OCI-LY7 (cell line): ENCODE measurements at regions of chr17 and their contacts with region 1.

Region 1: GRCh38 chr17:63946440-63947367 is 14.6 kb upstream of the CD79B start:
- DNase-seq: peak; percentile 85
- H3K4me3 ChIP-seq: peak overlapping the region; percentile 49
- H3K27ac ChIP-seq: peak overlapping the region; percentile 85
- H3K4me1 ChIP-seq: peaks cover 56% of the 10 kb centered on the region
- CTCF ChIP-seq: peak; percentile 80

Region 2: DNA sequence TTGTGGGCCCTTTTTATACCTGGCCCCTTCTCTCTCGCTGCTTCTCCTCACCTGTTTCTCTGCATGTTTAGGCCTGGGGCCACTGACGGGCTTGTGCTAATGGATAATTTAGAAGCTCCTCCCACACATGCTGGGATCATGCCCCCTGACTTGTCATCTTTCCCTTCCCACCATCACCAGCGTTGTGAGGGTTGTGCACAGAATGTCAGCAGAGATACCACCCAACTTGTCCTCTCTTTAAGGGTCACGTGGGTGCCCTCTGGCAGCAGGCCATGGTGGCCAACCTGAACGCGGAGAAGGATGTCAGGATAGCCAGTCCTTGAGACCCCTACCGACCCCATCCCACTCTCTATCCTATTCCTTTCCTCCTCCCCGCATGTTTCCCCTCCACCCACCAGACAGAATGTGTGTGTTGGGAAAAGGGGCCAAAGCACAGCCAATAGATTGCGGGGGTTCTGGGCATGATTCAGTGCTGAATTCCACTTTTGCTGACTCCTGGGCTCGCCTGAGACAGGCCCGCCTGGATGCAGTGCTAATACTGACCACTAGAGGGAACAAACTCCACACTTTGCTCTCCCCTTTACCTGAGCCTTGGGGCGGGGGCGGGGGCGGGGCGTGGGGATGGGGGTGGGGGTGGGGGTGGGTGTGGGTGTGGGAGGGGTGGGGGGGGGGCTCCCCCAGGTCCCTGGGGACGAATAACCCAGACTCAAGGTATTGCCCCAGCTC is 64.7 kb before region 1 on chr17 and contains the start of gene GH2:
- CTCF ChIA-PET with region 1: no interaction called
- POLR2A ChIA-PET with region 1: no interaction called
- intact Hi-C with region 1: no loop called
- DNase-seq: peak; percentile 61
- H3K4me3 ChIP-seq: no peak within 1 kb of the TSS
- H3K27ac ChIP-seq: no peak within 1 kb of the TSS
- H3K4me1 ChIP-seq: no peaks in the 10 kb centered on the region
- CTCF ChIP-seq: peak; percentile 69
- total RNA-seq, gene GH2: not detected in 2 replicates

Region 3: DNA sequence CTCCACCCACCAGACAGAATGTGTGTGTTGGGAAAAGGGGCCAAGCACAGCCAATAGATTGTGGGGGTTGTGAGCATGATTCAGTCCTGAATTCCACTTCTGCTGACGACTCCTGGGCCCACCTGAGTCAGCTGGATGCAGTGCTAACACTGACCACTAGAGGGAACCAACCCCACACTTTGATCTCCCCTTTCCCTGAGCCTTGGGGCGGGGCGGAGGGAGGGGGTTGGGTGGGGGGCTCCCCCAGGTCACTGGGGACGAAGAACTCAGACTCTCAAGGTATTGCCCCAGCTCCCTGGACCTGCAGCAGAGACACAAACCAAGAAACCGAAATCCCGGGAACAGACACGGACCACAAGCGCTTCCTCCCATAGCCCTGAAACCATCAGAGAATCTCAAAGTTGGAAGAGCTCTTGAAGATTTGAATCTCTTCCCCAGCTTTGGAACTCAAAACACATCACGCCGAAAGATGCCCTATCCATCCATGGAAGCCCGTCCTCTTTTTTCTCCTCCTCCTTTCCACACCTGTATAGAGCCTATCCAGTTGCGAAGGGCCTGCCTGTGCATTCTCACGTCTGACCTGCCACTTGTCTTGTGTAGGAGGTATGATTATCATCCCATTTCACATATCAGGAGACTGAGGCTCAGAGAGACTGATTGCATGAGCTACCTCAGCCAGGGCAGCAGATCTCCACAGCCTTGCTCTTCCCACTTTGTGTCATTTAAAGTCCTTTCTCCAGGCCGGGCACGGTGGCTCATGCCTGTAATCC is 34.9 kb before region 1 on chr17:
- CTCF ChIA-PET with region 1: interaction called, 16 read pairs
- POLR2A ChIA-PET with region 1: interaction called, 7 read pairs
- intact Hi-C with region 1: no loop called
- DNase-seq: peak; percentile 62
- H3K4me3 ChIP-seq: no peak overlapping the region
- H3K27ac ChIP-seq: no peak overlapping the region
- H3K4me1 ChIP-seq: peaks cover 15% of the 10 kb centered on the region
- CTCF ChIP-seq: peak; percentile 67

Region 4: GRCh38 chr17:63925645-63926044 is 21.1 kb before region 1 on chr17:
- CTCF ChIA-PET with region 1: interaction called, 94 read pairs
- POLR2A ChIA-PET with region 1: interaction called, 52 read pairs
- intact Hi-C with region 1: no loop called
- DNase-seq: peak; percentile 95
- H3K4me3 ChIP-seq: peak overlapping the region; percentile 9
- H3K27ac ChIP-seq: peak overlapping the region; percentile 99
- H3K4me1 ChIP-seq: peaks cover 91% of the 10 kb centered on the region
- CTCF ChIP-seq: no peak; the same call in 1 of the 2 replicates

Region 5: GRCh38 chr17:63931099-63931561 is 15.6 kb before region 1 on chr17:
- CTCF ChIA-PET with region 1: interaction called, 21 read pairs
- POLR2A ChIA-PET with region 1: interaction called, 19 read pairs
- intact Hi-C with region 1: loop called (anchors 1 kb)
- DNase-seq: peak; percentile 83
- H3K4me3 ChIP-seq: peak overlapping the region; percentile 98
- H3K27ac ChIP-seq: peak overlapping the region; percentile 99
- H3K4me1 ChIP-seq: peaks cover 73% of the 10 kb centered on the region
- CTCF ChIP-seq: no peak

Region 6: GRCh38 chr17:64025732-64026294 is 79.1 kb after region 1 on chr17:
- CTCF ChIA-PET with region 1: no interaction called
- POLR2A ChIA-PET with region 1: interaction called, 4 read pairs
- intact Hi-C with region 1: loop called (anchors 2 kb)
- DNase-seq: peak; percentile 91
- H3K4me3 ChIP-seq: peak overlapping the region; percentile 20
- H3K27ac ChIP-seq: peak overlapping the region; percentile 20
- H3K4me1 ChIP-seq: peaks cover 73% of the 10 kb centered on the region
- CTCF ChIP-seq: peak; percentile 98

Region 7: GRCh38 chr17:64036198-64036922 is 89.7 kb after region 1 on chr17:
- CTCF ChIA-PET with region 1: no interaction called
- POLR2A ChIA-PET with region 1: no interaction called
- intact Hi-C with region 1: no loop called
- DNase-seq: no peak
- H3K4me3 ChIP-seq: no peak overlapping the region
- H3K27ac ChIP-seq: no peak overlapping the region
- H3K4me1 ChIP-seq: no peaks in the 10 kb centered on the region
- CTCF ChIP-seq: peak; percentile 55